ENCODE measurements at regions of chr14 and their contacts with region 1.

Region 1: DNA sequence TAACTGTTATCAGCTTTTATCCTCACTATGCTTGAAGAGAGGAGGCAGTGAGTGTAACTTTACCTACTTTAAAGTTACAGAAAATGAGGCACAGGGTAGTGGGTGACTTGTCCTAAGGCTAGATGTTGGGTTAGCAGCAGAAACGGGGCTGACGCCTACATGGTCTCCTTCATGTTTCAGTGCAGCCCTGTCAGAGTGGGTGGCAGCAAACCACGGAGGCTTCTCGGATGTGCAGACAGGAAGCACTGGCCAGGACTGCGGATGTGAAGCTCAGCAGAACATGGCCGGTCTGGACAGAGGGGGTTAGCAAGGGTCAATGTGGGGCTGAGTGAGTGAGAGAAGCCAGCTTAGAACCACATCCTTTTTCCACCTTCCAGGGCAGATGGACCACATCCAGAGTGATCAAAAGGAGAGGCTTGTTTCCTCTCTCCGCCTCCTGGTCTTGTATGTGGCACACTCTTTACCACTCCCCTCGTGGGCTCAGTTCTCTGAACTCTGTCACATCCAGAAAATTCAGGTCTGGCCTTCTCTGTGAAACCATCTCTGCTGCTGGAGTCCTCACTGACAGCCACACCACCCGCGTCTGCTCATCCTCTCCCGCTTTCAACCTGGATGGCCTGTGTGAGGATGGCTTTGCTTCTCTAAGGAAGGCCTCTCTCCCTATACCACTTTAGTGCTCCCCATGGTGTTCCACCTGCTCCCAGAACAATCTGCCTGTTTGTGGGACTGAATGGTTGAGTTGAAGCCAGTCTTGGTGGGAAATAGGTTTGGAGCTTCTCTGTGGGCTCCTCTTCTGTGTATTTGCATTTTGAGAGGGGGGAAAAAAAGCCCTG is 14.1 kb downstream of the SUSD6 start:
- DNase-seq: peak; percentile 64
- ATAC-seq: peak; percentile 90
- H3K4me3 ChIP-seq: peak overlapping the region in 4 of 5 experiments; percentile 2 to 26 (median 15)
- H3K4me3 Mint-ChIP-seq: peak overlapping the region; percentile 79
- H3K27ac ChIP-seq: peak overlapping the region; percentile 49 to 78
- H3K27ac Mint-ChIP-seq: peak overlapping the region; percentile 83
- H3K4me1 ChIP-seq: peaks cover 87 to 88% of the 10 kb centered on the region in 2 donors
- H3K4me1 Mint-ChIP-seq: peaks cover 88% of the 10 kb centered on the region
- H3K27me3 ChIP-seq: no peaks in the 10 kb centered on the region
- H3K27me3 Mint-ChIP-seq: no peaks in the 10 kb centered on the region
- CTCF ChIP-seq: no peak

Region 2: DNA sequence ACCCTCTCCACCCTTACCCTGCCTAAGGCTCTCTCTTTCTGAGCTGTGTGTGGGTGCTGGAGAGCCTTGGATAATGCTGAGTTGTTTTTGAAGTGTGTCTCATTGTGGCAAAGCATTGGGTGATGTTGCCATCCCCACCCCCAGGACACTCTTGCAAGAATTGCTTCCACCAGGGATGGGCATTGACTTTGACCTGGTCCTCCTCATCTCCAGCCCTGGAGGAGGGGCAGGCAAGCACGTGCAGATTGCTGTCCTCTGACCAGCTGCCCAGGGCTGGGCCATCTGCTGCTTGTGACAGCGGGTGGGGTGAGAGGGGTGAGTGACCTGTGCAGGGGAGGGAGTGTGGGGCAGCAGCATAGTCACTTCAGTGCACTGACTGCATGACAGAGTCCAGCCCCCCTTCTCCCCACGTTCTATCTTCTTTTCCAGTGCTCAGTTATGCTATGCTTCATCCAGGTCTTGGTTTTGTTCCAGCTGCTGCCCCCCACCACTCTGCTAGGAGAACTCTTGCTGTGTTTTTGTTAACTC is 12.1 kb after region 1 on chr14:
- CTCF ChIA-PET with region 1: interaction called, 4 read pairs
- POLR2A ChIA-PET with region 1: no interaction called
- intact Hi-C with region 1: loop called (anchors 2 kb)
- DNase-seq: no peak
- ATAC-seq: peak; percentile 19
- H3K4me3 ChIP-seq: peak overlapping the region in 1 of 5 experiments; percentile 9
- H3K4me3 Mint-ChIP-seq: peak overlapping the region; percentile 84
- H3K27ac ChIP-seq: peak overlapping the region; percentile 72 to 78
- H3K27ac Mint-ChIP-seq: peak overlapping the region; percentile 96
- H3K4me1 ChIP-seq: peaks cover 76 to 78% of the 10 kb centered on the region in 2 donors
- H3K4me1 Mint-ChIP-seq: peaks cover 88% of the 10 kb centered on the region
- H3K27me3 ChIP-seq: no peaks in the 10 kb centered on the region
- H3K27me3 Mint-ChIP-seq: no peaks in the 10 kb centered on the region
- CTCF ChIP-seq: no peak